ENCODE measurements at regions of chr14 and their contacts with region 1.

Region 1: DNA sequence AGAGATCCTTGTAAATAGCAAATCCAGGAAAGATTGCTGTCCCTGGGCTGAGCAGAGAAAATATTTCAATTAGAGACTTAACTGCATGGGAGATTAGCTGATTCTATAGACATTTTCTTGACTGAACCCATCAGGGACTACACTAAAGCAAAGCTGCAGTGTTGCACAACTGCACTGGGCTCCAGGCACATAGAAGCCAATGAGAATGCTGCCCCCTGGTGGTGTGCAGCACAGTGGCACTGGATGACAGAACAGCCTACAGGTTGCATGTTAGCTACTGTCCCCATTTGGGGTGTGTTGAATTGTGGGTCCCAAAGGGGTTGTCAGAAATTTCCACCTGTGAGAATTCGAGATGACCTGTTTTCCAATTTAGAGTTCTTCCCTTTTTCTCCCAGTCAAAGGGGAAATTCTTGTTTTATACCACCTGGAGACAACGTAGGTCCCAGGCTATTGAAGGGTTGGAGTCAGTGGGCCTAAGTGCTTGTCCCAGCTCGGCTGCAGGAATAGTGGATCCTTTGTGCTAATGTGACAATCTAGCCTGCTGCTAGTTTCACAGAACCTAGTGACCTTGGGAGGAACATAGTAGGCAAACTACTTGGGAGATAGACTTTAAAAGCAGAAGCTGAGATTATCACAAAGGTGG is 114.7 kb downstream of the SLC8A3 start:
- DNase-seq: no peak
- ATAC-seq: peak; percentile 92
- H3K4me3 ChIP-seq: no peak overlapping the region
- H3K27ac ChIP-seq: no peak overlapping the region
- H3K4me1 ChIP-seq: no peaks in the 10 kb centered on the region
- H3K27me3 ChIP-seq: peaks cover 0 to 2% of the 10 kb centered on the region in 2 experiments; a peak in 2 of 4 replicates
- CTCF ChIP-seq: peak; percentile 77 to 89 (median 82)
- EP300 ChIP-seq: no peak
- POLR2A ChIP-seq: no peak
- RAD21 ChIP-seq: peak; percentile 58

Region 2: DNA sequence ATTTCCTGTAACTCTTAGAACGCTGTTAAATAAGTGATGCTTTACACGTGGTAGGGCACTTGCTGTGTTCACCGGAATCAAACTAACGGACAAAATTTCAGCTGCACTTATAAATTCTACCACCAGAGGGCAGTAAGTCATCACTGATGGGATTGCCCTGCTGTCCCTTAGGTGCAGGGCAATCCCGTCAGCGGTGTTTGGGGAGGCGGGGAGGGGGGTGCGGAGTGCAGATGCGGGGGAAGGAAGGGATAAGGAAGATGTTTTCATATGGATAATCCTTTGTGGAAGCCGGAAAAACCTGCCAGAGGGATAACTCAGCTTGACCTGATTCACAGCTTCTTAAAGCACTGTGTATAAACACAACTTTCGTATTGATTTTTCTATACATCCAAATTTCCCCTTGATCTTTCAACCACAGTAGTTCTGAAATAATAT is 255.3 kb before region 1 on chr14:
- CTCF ChIA-PET with region 1: interaction called, 28 read pairs
- POLR2A ChIA-PET with region 1: no interaction called
- RAD21 ChIA-PET with region 1: interaction called, 4 read pairs
- SMC1A ChIA-PET with region 1: interaction called, 10 read pairs
- in situ Hi-C with region 1: no loop called
- intact Hi-C with region 1: loop called (anchors 1 kb)
- DNase-seq: peak; percentile 55
- ATAC-seq: peak; percentile 95
- H3K4me3 ChIP-seq: no peak overlapping the region
- H3K27ac ChIP-seq: no peak overlapping the region
- H3K4me1 ChIP-seq: no peaks in the 10 kb centered on the region
- H3K27me3 ChIP-seq: no peaks in the 10 kb centered on the region; a peak in 1 of 4 replicates
- CTCF ChIP-seq: peak; percentile 71 to 79 (median 75)
- EP300 ChIP-seq: no peak
- POLR2A ChIP-seq: no peak
- RAD21 ChIP-seq: peak; percentile 99

Region 3: GRCh38 chr14:70045844-70046535 is 28.1 kb before region 1 on chr14:
- CTCF ChIA-PET with region 1: interaction called, 10 read pairs
- POLR2A ChIA-PET with region 1: no interaction called
- RAD21 ChIA-PET with region 1: interaction called, 4 read pairs
- SMC1A ChIA-PET with region 1: no interaction called
- in situ Hi-C with region 1: no loop called
- intact Hi-C with region 1: no loop called
- DNase-seq: no peak
- ATAC-seq: peak; percentile 85
- H3K4me3 ChIP-seq: no peak overlapping the region
- H3K27ac ChIP-seq: no peak overlapping the region
- H3K4me1 ChIP-seq: no peaks in the 10 kb centered on the region
- H3K27me3 ChIP-seq: no peaks in the 10 kb centered on the region
- CTCF ChIP-seq: peak; percentile 35 to 63 (median 40); a peak in 4 of 6 replicates
- EP300 ChIP-seq: no peak
- POLR2A ChIP-seq: no peak
- RAD21 ChIP-seq: peak; percentile 37

Measured in GM12878 (cell line).